ENCODE measurements at regions of chr15 and their contacts with region 1.

Region 1: GRCh38 chr15:77543159-77543882 is 89.4 kb downstream of the LINGO1 start:
- DNase-seq: peak; percentile 85
- H3K4me3 Mint-ChIP-seq: peak overlapping the region; percentile 63
- H3K27ac Mint-ChIP-seq: peak overlapping the region; percentile 25
- H3K4me1 Mint-ChIP-seq: peaks cover 17% of the 10 kb centered on the region
- H3K27me3 Mint-ChIP-seq: no peaks in the 10 kb centered on the region
- CTCF ChIP-seq: peak; percentile 97

Region 2: GRCh38 chr15:77107531-77108355 is 435.6 kb before region 1 on chr15:
- CTCF ChIA-PET with region 1: interaction called, 42 read pairs
- POLR2A ChIA-PET with region 1: interaction called, 4 read pairs
- intact Hi-C with region 1: no loop called
- DNase-seq: peak; percentile 47
- H3K4me3 Mint-ChIP-seq: no peak overlapping the region
- H3K27ac Mint-ChIP-seq: no peak overlapping the region
- H3K4me1 Mint-ChIP-seq: no peaks in the 10 kb centered on the region
- H3K27me3 Mint-ChIP-seq: no peaks in the 10 kb centered on the region
- CTCF ChIP-seq: peak; percentile 44

Region 3: GRCh38 chr15:77181305-77182074 is 361.8 kb before region 1 on chr15:
- CTCF ChIA-PET with region 1: interaction called, 70 read pairs
- POLR2A ChIA-PET with region 1: interaction called, 8 read pairs
- intact Hi-C with region 1: loop called (anchors 1 kb)
- DNase-seq: no peak
- H3K4me3 Mint-ChIP-seq: no peak overlapping the region
- H3K27ac Mint-ChIP-seq: no peak overlapping the region
- H3K4me1 Mint-ChIP-seq: no peaks in the 10 kb centered on the region
- H3K27me3 Mint-ChIP-seq: no peaks in the 10 kb centered on the region
- CTCF ChIP-seq: no peak

Region 4: DNA sequence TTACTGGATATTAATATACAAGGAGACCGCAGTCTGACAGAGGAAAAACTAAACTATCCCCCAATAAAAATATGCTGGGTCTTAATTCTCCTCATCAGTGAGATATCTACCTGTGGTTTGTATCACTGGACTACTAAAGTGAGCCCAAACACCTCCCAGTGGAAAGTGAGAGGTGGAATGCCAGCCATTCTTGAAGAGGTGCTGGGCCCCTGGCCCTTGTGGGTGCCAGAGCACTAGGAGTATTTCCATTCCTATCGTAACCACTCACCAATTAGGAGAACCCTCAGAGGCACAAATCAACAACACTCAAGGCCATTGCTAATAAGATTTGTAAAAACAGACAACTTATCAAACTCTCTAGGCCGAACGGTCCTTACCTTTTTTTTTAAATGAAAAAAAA is 350.9 kb before region 1 on chr15:
- CTCF ChIA-PET with region 1: interaction called, 70 read pairs
- POLR2A ChIA-PET with region 1: interaction called, 8 read pairs
- intact Hi-C with region 1: no loop called
- DNase-seq: no peak
- H3K4me3 Mint-ChIP-seq: no peak overlapping the region
- H3K27ac Mint-ChIP-seq: no peak overlapping the region
- H3K4me1 Mint-ChIP-seq: no peaks in the 10 kb centered on the region
- H3K27me3 Mint-ChIP-seq: no peaks in the 10 kb centered on the region
- CTCF ChIP-seq: no peak

Region 5: GRCh38 chr15:77482570-77482969 is 60.8 kb before region 1 on chr15:
- CTCF ChIA-PET with region 1: interaction called, 12 read pairs
- POLR2A ChIA-PET with region 1: interaction called, 3 read pairs
- intact Hi-C with region 1: no loop called
- DNase-seq: peak; percentile 50
- H3K4me3 Mint-ChIP-seq: no peak overlapping the region
- H3K27ac Mint-ChIP-seq: no peak overlapping the region
- H3K4me1 Mint-ChIP-seq: peaks cover 20% of the 10 kb centered on the region
- H3K27me3 Mint-ChIP-seq: no peaks in the 10 kb centered on the region
- CTCF ChIP-seq: no peak

Region 6: GRCh38 chr15:77507911-77508310 is 35.4 kb before region 1 on chr15:
- CTCF ChIA-PET with region 1: interaction called, 33 read pairs
- POLR2A ChIA-PET with region 1: interaction called, 3 read pairs
- intact Hi-C with region 1: no loop called
- DNase-seq: peak; percentile 65
- H3K4me3 Mint-ChIP-seq: no peak overlapping the region
- H3K27ac Mint-ChIP-seq: peak overlapping the region; percentile 88
- H3K4me1 Mint-ChIP-seq: peaks cover 55% of the 10 kb centered on the region
- H3K27me3 Mint-ChIP-seq: no peaks in the 10 kb centered on the region
- CTCF ChIP-seq: no peak

Region 7: GRCh38 chr15:77581896-77582569 is 38.7 kb after region 1 on chr15:
- CTCF ChIA-PET with region 1: no interaction called
- POLR2A ChIA-PET with region 1: no interaction called
- intact Hi-C with region 1: no loop called
- DNase-seq: no peak
- H3K4me3 Mint-ChIP-seq: no peak overlapping the region
- H3K27ac Mint-ChIP-seq: no peak overlapping the region
- H3K4me1 Mint-ChIP-seq: no peaks in the 10 kb centered on the region
- H3K27me3 Mint-ChIP-seq: peaks cover 12% of the 10 kb centered on the region
- CTCF ChIP-seq: no peak

Measured in MCF 10A (cell line).